Heart left ventricle (tissue), 16 donors: ENCODE measurements at regions of chr6 and their contacts with region 1.

Region 1: GRCh38 chr6:18387061-18387721 is at the start of gene RNF144B:
- DNase-seq: peak; percentile 82 to 93 (median 90)
- ATAC-seq: peak; percentile 93 to 98 (median 97)
- H3K4me3 ChIP-seq: peak within 1 kb of the TSS; percentile 50 to 83 (median 68)
- H3K27ac ChIP-seq: peak within 1 kb of the TSS; percentile 53 to 91 (median 76)
- H3K4me1 ChIP-seq: peaks cover 0 to 47% (median 19%) of the 10 kb centered on the region in 12 donors
- H3K27me3 ChIP-seq: no peaks in the 10 kb centered on the region
- CTCF ChIP-seq: no peak
- POLR2A ChIP-seq: peak in 1 of 2 donors; percentile 77
- total RNA-seq, gene RNF144B: 7.1 to 20.7 (median 12.3) TPM

Region 2: DNA sequence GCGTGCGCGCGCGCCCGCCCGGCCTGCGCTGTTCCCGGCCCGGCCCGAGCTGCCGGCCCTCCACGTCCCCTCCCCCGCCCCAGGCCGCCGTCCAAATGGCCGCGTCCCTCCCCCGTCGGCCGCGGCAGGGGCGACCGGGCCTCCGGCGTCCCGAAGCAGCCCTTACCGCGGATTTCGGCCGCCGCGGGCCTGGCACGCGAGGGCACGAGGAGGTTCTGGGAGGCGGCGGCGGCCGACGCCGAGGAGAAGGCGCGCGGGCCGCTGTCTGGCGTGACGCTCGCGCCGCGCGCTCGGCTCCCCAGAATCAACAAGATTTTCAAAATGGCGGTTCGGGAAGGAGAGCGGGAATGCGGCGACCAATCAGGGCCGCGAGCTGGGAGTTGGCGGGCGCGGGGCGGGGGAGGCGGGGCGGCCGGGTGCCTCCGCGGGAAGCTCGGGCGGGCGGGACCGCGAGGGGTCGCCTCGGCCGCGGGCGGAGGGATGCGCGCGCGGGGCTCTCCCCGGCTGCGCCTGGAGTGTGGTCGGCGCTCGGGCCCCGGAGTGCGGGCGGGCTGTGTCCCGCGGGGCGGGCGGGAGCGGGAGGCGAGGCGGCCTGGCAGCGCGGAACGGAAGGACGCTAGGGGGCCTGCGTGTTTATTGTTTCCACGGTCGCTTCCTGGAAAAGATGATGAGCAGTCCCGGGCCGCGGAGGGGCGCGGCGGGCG is 122.8 kb before region 1 on chr6 and contains the start of gene DEK:
- intact Hi-C with region 1: loop called in 1 of 10 experiments (anchors 2 kb)
- DNase-seq: peak; percentile 90 to 93 (median 90)
- ATAC-seq: peak; percentile 48 to 92 (median 90)
- H3K4me3 ChIP-seq: peak within 1 kb of the TSS; percentile 43 to 99 (median 92)
- H3K27ac ChIP-seq: peak within 1 kb of the TSS; percentile 90 to 100 (median 96)
- H3K4me1 ChIP-seq: peaks cover 0 to 46% (median 31%) of the 10 kb centered on the region in 12 donors
- H3K27me3 ChIP-seq: no peaks in the 10 kb centered on the region
- CTCF ChIP-seq: peak; percentile 24 to 85 (median 56)
- POLR2A ChIP-seq: peak in 1 of 2 donors; percentile 34
- total RNA-seq, gene DEK: 41.3 to 83.0 (median 64.7) TPM

Region 3: GRCh38 chr6:18323935-18324705 is 63.1 kb before region 1 on chr6:
- intact Hi-C with region 1: loop called in 3 of 10 experiments (anchors 5 to 10 kb)
- DNase-seq: no peak
- ATAC-seq: peak in 3 of 4 donors; percentile 62 to 72 (median 70)
- H3K4me3 ChIP-seq: no peak overlapping the region
- H3K27ac ChIP-seq: no peak overlapping the region
- H3K4me1 ChIP-seq: peaks cover 0 to 29% (median 0%) of the 10 kb centered on the region in 12 donors
- H3K27me3 ChIP-seq: no peaks in the 10 kb centered on the region
- CTCF ChIP-seq: peak; percentile 62 to 86 (median 74)
- POLR2A ChIP-seq: no peak

Region 4: DNA sequence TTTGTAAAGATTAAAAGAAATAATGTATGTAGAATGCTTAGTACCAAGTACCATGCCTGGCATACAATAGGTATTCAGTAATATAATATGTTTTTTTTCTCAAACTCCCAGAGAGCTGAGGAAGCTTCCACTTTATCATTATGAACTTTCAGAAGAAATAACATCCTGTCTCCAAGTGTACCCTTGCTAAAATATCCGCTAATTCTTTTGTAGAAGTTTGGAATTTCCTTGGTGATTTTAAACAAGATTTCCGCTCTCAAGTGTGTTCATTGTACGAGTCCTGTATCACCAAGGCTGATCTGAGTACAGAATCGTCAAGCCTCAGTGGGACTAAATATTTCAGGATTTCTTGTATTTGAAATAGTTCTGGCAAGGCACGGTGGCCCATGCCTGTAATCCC is 16.2 kb before region 1 on chr6:
- intact Hi-C with region 1: loop called in 2 of 10 experiments (anchors 1 to 2 kb)
- DNase-seq: no peak
- ATAC-seq: peak; percentile 50 to 85 (median 59)
- H3K4me3 ChIP-seq: no peak overlapping the region
- H3K27ac ChIP-seq: peak overlapping the region; percentile 36 to 83 (median 72)
- H3K4me1 ChIP-seq: peaks cover 0 to 17% (median 0%) of the 10 kb centered on the region in 12 donors
- H3K27me3 ChIP-seq: no peaks in the 10 kb centered on the region
- CTCF ChIP-seq: no peak
- POLR2A ChIP-seq: no peak

Region 5: GRCh38 chr6:18897350-18897749 is 510.2 kb after region 1 on chr6:
- intact Hi-C with region 1: no loop called
- DNase-seq: no peak
- ATAC-seq: no peak
- H3K4me3 ChIP-seq: no peak overlapping the region
- H3K27ac ChIP-seq: no peak overlapping the region
- H3K4me1 ChIP-seq: peaks cover 0 to 7% (median 0%) of the 10 kb centered on the region in 12 donors
- H3K27me3 ChIP-seq: no peaks in the 10 kb centered on the region
- CTCF ChIP-seq: no peak
- POLR2A ChIP-seq: no peak